ENCODE measurements at regions of chr16 and their contacts with region 1.

Region 1: GRCh38 chr16:82639666-82640336 is 13.0 kb downstream of the CDH13 start:
- DNase-seq: peak in 7 of 9 experiments; percentile 8 to 63 (median 48)
- ATAC-seq: peak; percentile 55
- H3K4me3 ChIP-seq: no peak overlapping the region
- H3K4me3 Mint-ChIP-seq: no peak overlapping the region
- H3K27ac ChIP-seq: no peak overlapping the region
- H3K27ac Mint-ChIP-seq: no peak overlapping the region
- H3K4me1 ChIP-seq: no peaks in the 10 kb centered on the region
- H3K4me1 Mint-ChIP-seq: peaks cover 5% of the 10 kb centered on the region
- H3K27me3 ChIP-seq: no peaks in the 10 kb centered on the region
- H3K27me3 Mint-ChIP-seq: no peaks in the 10 kb centered on the region
- CTCF ChIP-seq: peak; percentile 69

Region 2: DNA sequence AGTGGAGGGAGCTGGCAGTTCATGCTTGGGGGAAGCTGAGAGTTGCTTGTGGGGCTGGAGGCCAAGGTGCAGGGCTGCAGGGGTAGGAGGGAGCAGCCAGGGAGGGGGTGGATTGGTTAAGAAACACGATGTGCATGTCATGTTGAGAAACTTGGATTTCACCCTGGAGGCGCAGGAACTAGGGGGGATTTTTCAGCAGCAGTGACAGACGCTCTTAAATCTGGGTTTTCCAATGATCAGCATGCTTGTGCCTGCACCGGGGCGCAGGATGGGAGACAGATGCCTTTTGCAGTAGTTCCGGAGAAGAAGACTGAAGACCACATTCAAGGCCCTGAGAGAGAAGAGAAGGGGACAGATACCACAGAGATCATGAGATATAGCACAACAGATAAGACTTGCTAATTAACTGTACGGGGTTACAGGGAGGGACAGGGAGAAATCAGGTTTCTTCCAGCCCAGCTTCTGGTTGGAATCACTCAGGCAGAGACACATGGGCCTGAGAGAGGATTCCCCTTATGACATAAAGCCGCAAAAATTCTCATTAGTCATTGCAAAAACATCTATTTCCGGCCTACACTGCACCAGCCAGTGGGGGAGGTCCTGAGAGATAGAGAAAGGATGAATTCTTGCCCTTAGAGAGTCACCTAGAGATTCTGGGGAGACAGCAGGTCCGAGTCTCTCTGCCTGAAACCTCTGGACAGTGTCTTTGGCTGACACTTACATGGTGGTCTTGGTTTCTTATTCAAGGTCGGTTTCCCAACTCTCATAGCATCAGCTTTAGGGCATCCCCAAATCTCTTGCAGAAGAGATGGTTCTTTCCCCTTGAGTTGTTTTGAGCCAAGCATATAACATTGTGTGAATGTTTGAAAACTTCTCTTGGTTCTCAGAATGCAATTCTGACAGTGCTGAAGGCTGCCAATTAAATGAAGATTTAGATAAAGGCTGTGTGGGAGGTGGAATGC is 14.0 kb after region 1 on chr16:
- CTCF ChIA-PET with region 1: interaction called, 27 read pairs
- POLR2A ChIA-PET with region 1: interaction called, 5 read pairs
- intact Hi-C with region 1: no loop called
- DNase-seq: peak in 8 of 9 experiments; percentile 1 to 89 (median 34)
- ATAC-seq: peak; percentile 62
- H3K4me3 ChIP-seq: no peak overlapping the region
- H3K4me3 Mint-ChIP-seq: peak overlapping the region; percentile 58
- H3K27ac ChIP-seq: peak overlapping the region in 1 of 2 experiments; percentile 91
- H3K27ac Mint-ChIP-seq: peak overlapping the region; percentile 90
- H3K4me1 ChIP-seq: peaks cover 63% of the 10 kb centered on the region
- H3K4me1 Mint-ChIP-seq: peaks cover 88% of the 10 kb centered on the region
- H3K27me3 ChIP-seq: no peaks in the 10 kb centered on the region
- H3K27me3 Mint-ChIP-seq: no peaks in the 10 kb centered on the region
- CTCF ChIP-seq: no peak

Region 3: GRCh38 chr16:82671741-82672140 is 31.9 kb after region 1 on chr16:
- CTCF ChIA-PET with region 1: interaction called, 32 read pairs
- POLR2A ChIA-PET with region 1: interaction called, 4 read pairs
- intact Hi-C with region 1: loop called (anchors 1 to 2 kb)
- DNase-seq: peak in 6 of 9 experiments; percentile 18 to 65 (median 41)
- ATAC-seq: no peak
- H3K4me3 ChIP-seq: no peak overlapping the region
- H3K4me3 Mint-ChIP-seq: no peak overlapping the region
- H3K27ac ChIP-seq: no peak overlapping the region
- H3K27ac Mint-ChIP-seq: no peak overlapping the region
- H3K4me1 ChIP-seq: no peaks in the 10 kb centered on the region
- H3K4me1 Mint-ChIP-seq: no peaks in the 10 kb centered on the region
- H3K27me3 ChIP-seq: peaks cover 0 to 3% of the 10 kb centered on the region in 2 experiments
- H3K27me3 Mint-ChIP-seq: peaks cover 3% of the 10 kb centered on the region
- CTCF ChIP-seq: peak; percentile 29

Region 4: DNA sequence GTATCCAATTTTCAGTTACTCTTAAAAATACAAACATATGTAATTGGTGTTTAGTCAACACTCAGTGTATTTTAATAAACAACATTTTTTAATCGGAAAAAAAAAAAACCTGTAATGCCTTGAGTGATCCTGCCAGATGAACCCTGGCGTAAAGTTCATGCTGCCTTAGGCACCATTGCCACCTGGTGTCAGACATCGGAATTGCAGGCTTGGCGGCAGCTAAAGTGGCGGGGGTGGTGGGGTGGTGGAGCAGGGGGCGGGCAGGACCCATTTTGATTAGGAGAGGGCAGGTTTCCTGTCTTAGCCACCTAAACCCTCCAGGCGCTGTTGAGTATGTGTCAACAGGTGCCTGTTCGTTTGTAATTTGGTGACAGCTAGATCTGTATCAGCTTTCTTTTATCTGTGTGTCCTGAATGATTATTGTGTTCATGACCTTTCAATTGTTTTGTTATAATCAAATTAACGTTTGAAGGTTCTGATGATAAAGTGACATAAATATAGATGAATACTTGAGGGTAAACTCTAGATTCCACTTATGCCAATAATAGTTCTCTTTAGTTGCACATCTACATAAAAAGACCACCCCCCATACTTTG is 575.7 kb after region 1 on chr16:
- CTCF ChIA-PET with region 1: interaction called, 3 read pairs
- POLR2A ChIA-PET with region 1: no interaction called
- intact Hi-C with region 1: loop called in 1 of 2 experiments (anchors 10 kb)
- DNase-seq: peak; percentile 3 to 57 (median 30)
- ATAC-seq: no peak
- H3K4me3 ChIP-seq: no peak overlapping the region
- H3K4me3 Mint-ChIP-seq: no peak overlapping the region
- H3K27ac ChIP-seq: no peak overlapping the region
- H3K27ac Mint-ChIP-seq: no peak overlapping the region
- H3K4me1 ChIP-seq: no peaks in the 10 kb centered on the region
- H3K4me1 Mint-ChIP-seq: no peaks in the 10 kb centered on the region
- H3K27me3 ChIP-seq: no peaks in the 10 kb centered on the region
- H3K27me3 Mint-ChIP-seq: peaks cover 3% of the 10 kb centered on the region
- CTCF ChIP-seq: peak; percentile 46